Activated T-helper 1 cell treated with anti-CD3 and anti-CD28 coated beads, Interleukin-12 subunit alpha, Interleukin-12 subunit beta, Interleukin-2, Interleukin-4 antibody, amounts not matched to agents 30 ng/mL and 10 ng/mL and 1 ng/mL, durations not matched to agents 14 hours and 24 hours and 36 hours (primary cell): ENCODE measurements at regions of chr7 and their contacts with region 1.

Region 1: GRCh38 chr7:64794171-64794844 is at the start of gene ZNF138:
- DNase-seq: peak; percentile 90
- H3K4me3 Mint-ChIP-seq: peak within 1 kb of the TSS; percentile 98
- H3K27ac Mint-ChIP-seq: peak within 1 kb of the TSS; percentile 98
- H3K4me1 Mint-ChIP-seq: peaks cover 21% of the 10 kb centered on the region
- H3K27me3 Mint-ChIP-seq: no peaks in the 10 kb centered on the region
- total RNA-seq, gene ZNF138: 7.7 and 7.9 TPM in 2 replicates

Region 2: DNA sequence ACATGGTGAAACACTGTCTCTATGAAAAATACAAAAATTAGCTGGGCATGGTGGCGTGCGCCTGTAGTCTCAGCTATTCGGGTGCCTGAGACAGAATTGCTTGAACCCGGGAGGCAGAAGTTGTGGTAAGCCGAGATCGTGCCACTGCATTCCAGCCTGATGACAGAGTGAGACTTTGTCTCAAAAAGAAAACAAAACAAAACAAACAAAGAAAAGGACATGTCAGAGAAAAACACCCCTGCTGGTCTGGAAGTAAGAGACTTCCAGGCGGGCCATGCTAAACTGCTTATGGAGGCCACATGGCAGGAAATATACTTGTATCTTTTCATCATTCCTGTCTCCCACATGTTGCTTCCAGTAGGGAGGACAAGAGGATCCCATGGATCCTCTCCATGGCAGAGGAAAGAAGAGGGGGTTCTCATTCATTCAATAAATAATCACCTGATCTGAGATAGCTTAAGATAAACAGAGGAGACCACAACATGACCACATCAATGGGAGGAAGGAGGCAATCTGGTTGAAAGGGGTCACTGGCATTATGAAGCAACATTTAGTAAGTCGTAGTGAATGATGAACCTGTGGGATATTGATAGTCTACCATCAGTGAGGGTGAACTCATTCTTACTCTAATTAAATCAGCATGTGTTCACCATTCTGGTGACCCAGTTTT is 60.6 kb before region 1 on chr7:
- intact Hi-C with region 1: no loop called
- DNase-seq: no peak
- H3K4me3 Mint-ChIP-seq: no peak overlapping the region
- H3K27ac Mint-ChIP-seq: no peak overlapping the region
- H3K4me1 Mint-ChIP-seq: no peaks in the 10 kb centered on the region
- H3K27me3 Mint-ChIP-seq: no peaks in the 10 kb centered on the region

Region 3: DNA sequence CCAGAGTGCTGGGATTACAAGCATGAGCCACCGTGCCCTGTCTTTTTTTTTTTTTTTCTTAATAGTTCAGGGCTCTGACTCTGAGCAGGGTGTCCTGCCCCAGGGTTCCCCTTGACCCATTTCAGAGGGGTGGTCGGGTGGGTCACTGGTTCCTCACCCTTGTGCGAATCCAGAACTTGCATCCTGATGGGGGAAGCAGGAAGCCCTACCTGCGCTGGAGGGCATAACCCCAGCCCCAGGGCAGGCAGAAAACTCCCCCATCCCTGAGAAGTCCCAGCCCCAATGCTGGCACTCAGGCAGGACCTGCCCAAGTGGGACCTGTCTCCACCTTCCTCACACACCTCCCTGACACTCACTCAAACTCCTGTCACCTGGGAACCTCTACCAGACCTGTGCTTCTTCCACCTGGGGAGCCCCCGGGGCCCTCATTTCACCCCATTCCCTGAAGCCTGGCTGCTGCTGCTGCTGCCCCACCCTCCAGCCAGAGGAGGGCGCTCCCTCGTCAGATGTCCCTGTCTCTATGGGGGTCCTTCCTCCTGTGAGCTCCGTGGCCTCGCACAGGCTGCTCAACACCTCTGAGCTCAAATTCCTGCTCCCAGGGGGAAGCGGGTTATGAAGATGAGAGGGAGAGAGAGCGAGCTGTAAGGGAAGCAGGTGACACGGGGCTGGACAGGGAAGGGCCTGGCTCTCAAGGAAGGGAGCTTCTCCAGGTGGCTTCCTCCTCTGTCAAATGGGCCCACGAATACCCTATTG is 93.6 kb after region 1 on chr7:
- intact Hi-C with region 1: loop called (anchors 5 kb)
- DNase-seq: no peak
- H3K4me3 Mint-ChIP-seq: peak overlapping the region; percentile 85
- H3K27ac Mint-ChIP-seq: no peak overlapping the region
- H3K4me1 Mint-ChIP-seq: peaks cover 10% of the 10 kb centered on the region
- H3K27me3 Mint-ChIP-seq: peaks cover 23% of the 10 kb centered on the region

Region 4: GRCh38 chr7:64902806-64903721 is 108.8 kb after region 1 on chr7 and contains the start of gene ZNF273:
- intact Hi-C with region 1: loop called (anchors 1 kb)
- DNase-seq: peak; percentile 87
- H3K4me3 Mint-ChIP-seq: peak within 1 kb of the TSS; percentile 98
- H3K27ac Mint-ChIP-seq: peak within 1 kb of the TSS; percentile 93
- H3K4me1 Mint-ChIP-seq: peaks cover 29% of the 10 kb centered on the region
- H3K27me3 Mint-ChIP-seq: no peaks in the 10 kb centered on the region
- total RNA-seq, gene ZNF273: 8.5 and 9.3 TPM in 2 replicates